Activated CD4-positive, alpha-beta memory T cell treated with anti-CD3 and anti-CD28 coated beads for 36 hours (primary cell): ENCODE measurements at regions of chr3 and their contacts with region 1.

Region 1: DNA sequence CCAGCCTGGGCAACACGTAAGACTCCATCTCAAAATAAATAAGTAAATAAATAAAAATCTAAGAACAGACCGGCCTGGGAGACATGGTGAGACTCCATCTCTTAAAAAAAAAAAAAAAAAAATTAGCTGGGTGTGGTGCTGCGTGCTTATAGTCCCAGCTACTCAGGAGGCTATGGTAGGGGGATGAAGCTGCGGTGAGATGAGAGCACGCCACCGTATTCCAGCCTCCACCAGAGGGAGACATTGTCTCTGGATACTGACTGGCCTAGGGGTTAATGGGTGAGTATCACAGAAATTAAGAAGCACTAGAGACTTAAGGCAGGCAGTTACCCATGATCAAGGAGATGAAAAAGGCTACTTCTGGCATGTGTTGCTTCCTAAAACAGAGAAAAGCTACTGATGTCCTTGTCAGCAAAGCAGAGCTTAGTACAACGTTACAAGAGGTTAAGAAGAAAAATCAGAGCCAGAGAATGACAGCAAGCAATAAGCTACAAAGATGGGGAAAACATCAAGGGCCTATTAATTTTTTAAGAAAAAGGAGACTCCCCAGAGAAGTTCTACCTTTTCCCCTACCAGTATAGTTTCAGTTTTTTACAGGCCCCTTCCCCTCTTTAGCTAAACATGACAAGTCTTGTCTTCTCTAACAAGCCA is 8.6 kb downstream of the TFRC start:
- DNase-seq: peak; percentile 79
- H3K4me3 Mint-ChIP-seq: no peak overlapping the region
- H3K27ac Mint-ChIP-seq: peak overlapping the region; percentile 53
- H3K4me1 Mint-ChIP-seq: peaks cover 32% of the 10 kb centered on the region
- H3K27me3 Mint-ChIP-seq: no peaks in the 10 kb centered on the region

Region 2: GRCh38 chr3:196047391-196048030 is 25.8 kb before region 1 on chr3:
- CTCF ChIA-PET with region 1: interaction called, 24 read pairs
- POLR2A ChIA-PET with region 1: interaction called, 6 read pairs
- intact Hi-C with region 1: no loop called
- DNase-seq: no peak
- H3K4me3 Mint-ChIP-seq: no peak overlapping the region
- H3K27ac Mint-ChIP-seq: no peak overlapping the region
- H3K4me1 Mint-ChIP-seq: no peaks in the 10 kb centered on the region
- H3K27me3 Mint-ChIP-seq: no peaks in the 10 kb centered on the region

Region 3: GRCh38 chr3:196093317-196094111 is 20.2 kb after region 1 on chr3:
- CTCF ChIA-PET with region 1: interaction called, 15 read pairs
- POLR2A ChIA-PET with region 1: interaction called, 3 read pairs
- intact Hi-C with region 1: no loop called
- DNase-seq: no peak
- H3K4me3 Mint-ChIP-seq: no peak overlapping the region
- H3K27ac Mint-ChIP-seq: no peak overlapping the region
- H3K4me1 Mint-ChIP-seq: peaks cover 7% of the 10 kb centered on the region
- H3K27me3 Mint-ChIP-seq: no peaks in the 10 kb centered on the region

Region 4: GRCh38 chr3:196186651-196187573 is 113.6 kb after region 1 on chr3:
- CTCF ChIA-PET with region 1: interaction called, 292 read pairs
- POLR2A ChIA-PET with region 1: interaction called, 5 read pairs
- intact Hi-C with region 1: no loop called
- DNase-seq: peak; percentile 49
- H3K4me3 Mint-ChIP-seq: peak overlapping the region; percentile 53
- H3K27ac Mint-ChIP-seq: peak overlapping the region; percentile 64
- H3K4me1 Mint-ChIP-seq: peaks cover 41% of the 10 kb centered on the region
- H3K27me3 Mint-ChIP-seq: no peaks in the 10 kb centered on the region

Region 5: DNA sequence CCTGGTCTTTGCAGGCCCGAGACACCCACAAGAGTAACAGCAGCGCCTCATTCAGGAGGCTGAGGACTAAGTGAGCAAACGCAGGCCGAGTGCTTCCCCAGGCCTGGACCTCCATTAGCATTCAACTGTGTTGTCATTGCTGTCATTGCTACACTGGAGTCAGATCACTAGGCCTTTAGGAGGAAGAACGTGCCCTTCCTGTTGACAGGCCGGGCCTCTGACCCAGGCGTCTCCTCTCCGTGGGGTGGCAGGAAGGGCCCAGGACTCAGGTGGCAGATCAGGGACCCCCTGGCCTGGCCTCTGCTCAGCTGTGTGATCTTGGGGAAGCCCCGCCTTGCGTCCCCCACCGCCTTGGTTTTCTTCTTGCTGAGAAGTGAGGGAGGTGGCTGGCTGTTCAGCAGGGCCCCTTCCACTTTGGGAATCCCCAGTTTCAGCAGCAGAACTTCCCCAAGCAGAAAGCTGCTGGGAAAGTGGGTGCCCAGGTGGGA is 118.8 kb after region 1 on chr3:
- CTCF ChIA-PET with region 1: interaction called, 292 read pairs
- POLR2A ChIA-PET with region 1: interaction called, 6 read pairs
- intact Hi-C with region 1: loop called (anchors 1 kb)
- DNase-seq: peak; percentile 78
- H3K4me3 Mint-ChIP-seq: peak overlapping the region; percentile 50
- H3K27ac Mint-ChIP-seq: peak overlapping the region; percentile 86
- H3K4me1 Mint-ChIP-seq: peaks cover 48% of the 10 kb centered on the region
- H3K27me3 Mint-ChIP-seq: no peaks in the 10 kb centered on the region

Region 6: DNA sequence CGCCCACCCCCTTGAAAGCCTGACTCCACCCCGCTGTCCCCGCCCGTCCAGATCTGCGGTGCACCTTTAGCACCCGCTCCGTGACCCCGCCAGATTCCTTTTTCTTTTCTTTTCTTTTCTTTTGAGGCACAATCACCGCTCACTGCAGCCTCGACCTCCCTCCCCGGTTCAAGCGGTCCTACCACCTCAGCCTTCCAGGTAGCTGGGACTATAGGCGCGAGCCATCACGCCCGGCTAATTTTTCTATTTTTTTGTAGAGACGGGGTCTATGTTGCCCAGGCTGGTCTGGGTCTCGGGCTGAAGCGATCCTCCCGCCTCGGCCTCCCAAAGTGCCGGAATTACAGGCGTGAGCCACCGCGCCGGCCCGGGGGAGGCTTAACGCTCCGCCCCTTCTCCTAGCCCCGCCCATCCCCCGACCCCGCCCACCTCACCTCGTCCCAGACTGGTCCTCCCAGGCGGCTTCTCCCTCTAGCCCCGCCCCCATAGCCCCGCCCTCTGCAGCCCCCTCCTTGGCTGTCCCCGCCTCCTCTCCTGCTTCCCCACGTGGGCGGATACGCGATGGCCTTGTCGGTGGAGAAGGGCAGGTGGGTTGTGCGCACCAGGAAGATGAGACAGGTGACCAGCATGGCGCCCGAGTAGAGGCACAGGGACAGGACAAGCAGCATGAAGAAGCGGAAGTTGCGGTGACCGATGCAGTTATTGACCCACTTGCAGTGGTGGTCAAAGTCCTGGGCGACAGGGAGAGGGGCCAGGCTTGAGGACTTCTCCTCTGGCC is 134.7 kb after region 1 on chr3:
- CTCF ChIA-PET with region 1: interaction called, 13 read pairs
- POLR2A ChIA-PET with region 1: no interaction called
- intact Hi-C with region 1: no loop called
- DNase-seq: peak; percentile 90
- H3K4me3 Mint-ChIP-seq: peak overlapping the region; percentile 76
- H3K27ac Mint-ChIP-seq: peak overlapping the region; percentile 33
- H3K4me1 Mint-ChIP-seq: peaks cover 9% of the 10 kb centered on the region
- H3K27me3 Mint-ChIP-seq: no peaks in the 10 kb centered on the region

Region 7: DNA sequence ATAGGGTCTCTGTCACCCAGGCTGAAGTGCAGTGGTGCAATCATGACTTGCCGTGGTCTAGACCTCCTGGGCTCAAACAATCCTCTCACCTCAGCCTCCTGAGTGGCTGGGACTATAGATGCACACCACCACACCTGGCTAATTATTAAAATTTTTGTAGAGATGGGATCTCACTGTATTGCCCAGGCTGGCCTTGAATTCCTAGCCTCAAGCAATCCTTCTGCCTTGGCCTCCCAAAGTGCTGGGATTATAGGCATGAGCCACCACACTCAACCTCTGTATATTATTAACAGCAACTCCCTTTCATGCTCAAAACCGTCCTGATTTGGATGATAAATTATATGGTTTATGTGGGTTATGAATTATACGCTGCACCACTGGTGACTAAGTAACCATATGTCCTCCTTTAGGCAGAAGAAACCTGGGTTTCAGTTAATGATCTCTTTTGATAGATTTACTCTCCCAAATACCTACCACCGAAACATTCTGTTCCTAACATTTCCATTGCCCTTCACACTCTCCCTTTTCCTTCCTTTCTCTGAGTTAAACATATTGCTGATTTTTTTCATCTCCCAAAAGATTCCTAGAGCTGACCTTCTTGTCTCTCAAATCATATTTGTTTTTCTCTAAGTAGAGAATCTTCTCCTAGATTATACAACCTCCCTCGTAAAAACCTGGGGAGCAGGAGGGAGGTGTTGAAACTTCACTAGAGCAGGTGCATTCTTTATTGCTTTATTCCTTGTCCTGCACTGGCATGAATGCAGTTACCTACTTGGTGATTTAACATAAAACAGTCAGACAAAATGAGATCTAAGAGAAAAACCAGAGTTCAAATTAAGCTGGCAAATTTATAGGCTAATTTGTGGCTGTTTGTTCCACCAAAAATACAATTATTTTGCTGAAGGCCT is 181.3 kb after region 1 on chr3:
- CTCF ChIA-PET with region 1: no interaction called
- POLR2A ChIA-PET with region 1: no interaction called
- intact Hi-C with region 1: no loop called
- DNase-seq: no peak
- H3K4me3 Mint-ChIP-seq: no peak overlapping the region
- H3K27ac Mint-ChIP-seq: no peak overlapping the region
- H3K4me1 Mint-ChIP-seq: peaks cover 6% of the 10 kb centered on the region
- H3K27me3 Mint-ChIP-seq: no peaks in the 10 kb centered on the region